PC-3 (cell line): ENCODE measurements at regions of chr22 and their contacts with region 1.

Region 1: DNA sequence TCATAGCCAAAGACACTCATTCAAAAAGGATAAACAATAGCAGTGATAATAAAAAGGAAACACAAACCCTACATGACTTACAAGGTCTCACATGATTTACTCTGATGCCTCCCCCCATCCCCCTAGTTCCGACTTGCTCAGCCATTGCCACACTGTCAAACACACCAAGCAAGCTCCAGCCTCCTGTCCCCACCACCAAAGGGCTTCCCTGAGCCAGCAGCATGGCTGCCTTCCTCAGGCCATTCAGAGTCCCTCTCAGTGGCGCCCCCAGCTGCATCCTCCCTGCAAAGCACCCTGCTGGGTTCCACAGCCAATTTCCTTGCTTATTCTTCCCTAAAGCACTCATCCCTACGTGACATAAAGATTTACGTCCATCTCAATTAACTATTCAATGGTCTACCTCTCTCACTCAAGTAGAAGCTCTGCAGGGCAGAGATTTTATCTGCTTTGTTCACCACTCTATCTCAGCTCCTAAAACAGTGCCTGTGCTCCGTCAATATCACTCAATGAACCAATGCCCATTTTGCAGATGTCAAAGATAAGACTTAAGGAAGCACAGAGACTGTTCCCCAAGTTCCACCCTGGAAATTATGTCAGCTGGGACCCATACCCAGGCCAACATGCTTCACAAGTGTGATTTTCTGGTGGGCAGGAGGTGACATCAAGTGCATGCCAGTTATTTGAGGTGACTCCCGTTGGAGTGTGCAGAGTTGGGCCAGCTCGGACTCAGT is 106.9 kb downstream of the SYN3 start:
- DNase-seq: no peak
- ATAC-seq: no peak
- H3K4me3 ChIP-seq: no peak overlapping the region
- H3K27ac ChIP-seq: no peak overlapping the region
- H3K4me1 ChIP-seq: no peaks in the 10 kb centered on the region
- H3K27me3 ChIP-seq: no peaks in the 10 kb centered on the region
- CTCF ChIP-seq: no peak

Region 2: GRCh38 chr22:32636884-32637283 is 314.4 kb before region 1 on chr22:
- CTCF ChIA-PET with region 1: no interaction called
- POLR2A ChIA-PET with region 1: no interaction called
- intact Hi-C with region 1: no loop called
- DNase-seq: no peak
- ATAC-seq: no peak
- H3K4me3 ChIP-seq: no peak overlapping the region
- H3K27ac ChIP-seq: no peak overlapping the region
- H3K4me1 ChIP-seq: no peaks in the 10 kb centered on the region
- H3K27me3 ChIP-seq: no peaks in the 10 kb centered on the region
- CTCF ChIP-seq: no peak

Region 3: GRCh38 chr22:32747588-32747987 is 203.7 kb before region 1 on chr22:
- CTCF ChIA-PET with region 1: no interaction called
- POLR2A ChIA-PET with region 1: interaction called, 23 read pairs
- intact Hi-C with region 1: no loop called
- DNase-seq: no peak
- ATAC-seq: no peak
- H3K4me3 ChIP-seq: no peak overlapping the region
- H3K27ac ChIP-seq: no peak overlapping the region
- H3K4me1 ChIP-seq: no peaks in the 10 kb centered on the region
- H3K27me3 ChIP-seq: no peaks in the 10 kb centered on the region
- CTCF ChIP-seq: no peak